CD14-positive monocyte (primary cell): ENCODE measurements at regions of chr19 and their contacts with region 1.

Region 1: DNA sequence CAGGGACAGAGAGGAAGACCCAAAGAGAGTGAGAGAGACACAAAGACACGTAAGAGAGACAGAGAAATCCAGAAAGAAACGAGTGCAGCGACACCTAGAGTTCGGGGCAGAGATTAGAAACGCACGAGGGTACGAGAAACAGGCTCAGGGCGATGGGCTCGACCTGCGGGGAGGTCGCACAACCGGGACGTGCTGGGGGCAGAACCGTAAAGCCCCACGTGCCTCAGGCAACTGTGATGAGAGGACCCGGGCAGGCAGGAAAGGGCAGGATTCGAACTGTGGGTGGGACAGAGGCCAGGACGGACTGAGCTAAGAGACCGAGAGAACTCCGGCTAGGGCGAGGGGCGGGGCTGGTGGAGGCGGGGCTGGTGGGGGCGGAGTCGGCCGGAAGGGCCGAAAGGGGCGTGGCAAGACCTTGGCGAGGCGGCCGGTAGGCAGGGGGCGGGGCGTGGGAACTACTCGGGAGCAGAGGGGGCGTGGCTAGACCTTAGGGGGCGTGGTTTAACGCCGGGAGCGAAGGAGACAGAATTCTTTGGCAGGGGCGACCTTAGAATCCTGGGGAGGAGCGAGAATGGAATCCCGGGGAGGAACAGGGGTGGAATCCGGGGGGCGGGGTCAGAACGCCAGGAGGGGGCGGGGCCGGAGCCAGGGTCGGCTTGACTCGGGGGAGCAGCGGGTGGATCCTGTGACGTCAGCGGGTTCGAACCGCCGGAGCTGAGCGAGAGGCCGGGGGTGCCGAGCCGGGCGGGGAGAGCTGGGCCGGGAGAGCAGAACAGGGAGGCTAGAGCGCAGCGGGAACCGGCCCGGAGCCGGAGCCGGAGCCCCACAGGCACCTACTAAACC is at the start of gene NECTIN2:
- DNase-seq: peak; percentile 89 to 95 (median 93)
- H3K4me3 ChIP-seq: peak within 1 kb of the TSS; percentile 47 to 94 (median 85)
- H3K4me3 Mint-ChIP-seq: peak within 1 kb of the TSS; percentile 96 to 98
- H3K27ac ChIP-seq: peak within 1 kb of the TSS; percentile 24 to 80
- H3K27ac Mint-ChIP-seq: peak within 1 kb of the TSS; percentile 76 to 99 (median 95)
- H3K4me1 ChIP-seq: peaks cover 45 to 55% of the 10 kb centered on the region in 2 donors
- H3K4me1 Mint-ChIP-seq: peaks cover 38% of the 10 kb centered on the region
- H3K27me3 ChIP-seq: peaks cover 0 to 3% of the 10 kb centered on the region in 2 donors
- H3K27me3 Mint-ChIP-seq: peaks cover 14 to 26% (median 26%) of the 10 kb centered on the region in 3 donors
- CTCF ChIP-seq: peak; percentile 3
- polyA plus RNA-seq, gene NECTIN2: 5.6 to 18.2 (median 9.3) TPM

Region 2: GRCh38 chr19:44570984-44571684 is 274.7 kb before region 1 on chr19:
- intact Hi-C with region 1: loop called (anchors 10 kb)
- DNase-seq: peak; percentile 65 to 73 (median 71)
- H3K4me3 ChIP-seq: no peak overlapping the region
- H3K4me3 Mint-ChIP-seq: no peak overlapping the region
- H3K27ac ChIP-seq: no peak overlapping the region
- H3K27ac Mint-ChIP-seq: peak overlapping the region in 2 of 7 donors; percentile 17 to 36
- H3K4me1 ChIP-seq: peaks cover 15 to 21% of the 10 kb centered on the region in 2 donors
- H3K4me1 Mint-ChIP-seq: peaks cover 18% of the 10 kb centered on the region
- H3K27me3 ChIP-seq: no peaks in the 10 kb centered on the region
- H3K27me3 Mint-ChIP-seq: peaks cover 2 to 16% (median 6%) of the 10 kb centered on the region in 3 donors
- CTCF ChIP-seq: peak; percentile 89

Region 3: GRCh38 chr19:44689056-44689895 is 156.6 kb before region 1 on chr19:
- intact Hi-C with region 1: loop called in 1 of 2 experiments (anchors 10 kb)
- DNase-seq: peak; percentile 54 to 75 (median 60)
- H3K4me3 ChIP-seq: no peak overlapping the region
- H3K4me3 Mint-ChIP-seq: peak overlapping the region; percentile 24 to 60
- H3K27ac ChIP-seq: no peak overlapping the region
- H3K27ac Mint-ChIP-seq: peak overlapping the region in 6 of 7 donors; percentile 40 to 90 (median 62)
- H3K4me1 ChIP-seq: peaks cover 74 to 84% of the 10 kb centered on the region in 2 donors
- H3K4me1 Mint-ChIP-seq: peaks cover 77% of the 10 kb centered on the region
- H3K27me3 ChIP-seq: no peaks in the 10 kb centered on the region
- H3K27me3 Mint-ChIP-seq: peaks cover 3 to 5% (median 3%) of the 10 kb centered on the region in 3 donors
- CTCF ChIP-seq: peak; percentile 97

Region 4: DNA sequence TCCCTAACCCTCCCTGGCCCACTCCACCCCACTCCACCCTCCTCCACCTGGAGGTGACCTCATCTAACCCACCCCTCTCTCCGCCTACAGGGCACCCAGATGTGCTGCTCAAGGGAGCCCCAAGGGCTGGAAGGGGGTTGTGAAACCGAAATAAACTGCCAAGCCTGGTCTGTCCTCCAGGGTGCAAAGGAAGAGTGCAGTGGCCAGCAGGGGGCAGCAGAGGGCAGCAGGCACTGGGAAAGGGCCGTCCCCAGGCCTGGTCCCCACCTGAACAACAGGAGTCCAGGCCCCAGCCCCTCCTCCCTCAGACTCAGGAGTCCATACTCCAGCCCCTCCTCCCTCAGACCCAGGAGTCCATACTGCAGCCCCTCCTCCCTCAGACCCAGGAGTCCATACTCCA is 45.4 kb before region 1 on chr19:
- intact Hi-C with region 1: loop called (anchors 1 kb)
- DNase-seq: peak; percentile 76 to 82 (median 76)
- H3K4me3 ChIP-seq: no peak overlapping the region
- H3K4me3 Mint-ChIP-seq: no peak overlapping the region
- H3K27ac ChIP-seq: no peak overlapping the region
- H3K27ac Mint-ChIP-seq: no peak overlapping the region
- H3K4me1 ChIP-seq: peaks cover 3 to 5% of the 10 kb centered on the region in 2 donors
- H3K4me1 Mint-ChIP-seq: peaks cover 4% of the 10 kb centered on the region
- H3K27me3 ChIP-seq: no peaks in the 10 kb centered on the region
- H3K27me3 Mint-ChIP-seq: peaks cover 2 to 11% (median 5%) of the 10 kb centered on the region in 3 donors
- CTCF ChIP-seq: peak; percentile 81

Region 5: GRCh38 chr19:44890366-44891015 is 44.7 kb after region 1 on chr19:
- intact Hi-C with region 1: loop called in 1 of 2 experiments (anchors 2 kb)
- DNase-seq: peak; percentile 96 to 100 (median 100)
- H3K4me3 ChIP-seq: peak overlapping the region; percentile 61 to 78 (median 68)
- H3K4me3 Mint-ChIP-seq: peak overlapping the region; percentile 83 to 95
- H3K27ac ChIP-seq: peak overlapping the region; percentile 97 to 99
- H3K27ac Mint-ChIP-seq: peak overlapping the region; percentile 90 to 98 (median 96)
- H3K4me1 ChIP-seq: peaks cover 20 to 25% of the 10 kb centered on the region in 2 donors
- H3K4me1 Mint-ChIP-seq: peaks cover 23% of the 10 kb centered on the region
- H3K27me3 ChIP-seq: no peaks in the 10 kb centered on the region
- H3K27me3 Mint-ChIP-seq: peaks cover 0 to 2% (median 1%) of the 10 kb centered on the region in 3 donors
- CTCF ChIP-seq: no peak

Region 6: DNA sequence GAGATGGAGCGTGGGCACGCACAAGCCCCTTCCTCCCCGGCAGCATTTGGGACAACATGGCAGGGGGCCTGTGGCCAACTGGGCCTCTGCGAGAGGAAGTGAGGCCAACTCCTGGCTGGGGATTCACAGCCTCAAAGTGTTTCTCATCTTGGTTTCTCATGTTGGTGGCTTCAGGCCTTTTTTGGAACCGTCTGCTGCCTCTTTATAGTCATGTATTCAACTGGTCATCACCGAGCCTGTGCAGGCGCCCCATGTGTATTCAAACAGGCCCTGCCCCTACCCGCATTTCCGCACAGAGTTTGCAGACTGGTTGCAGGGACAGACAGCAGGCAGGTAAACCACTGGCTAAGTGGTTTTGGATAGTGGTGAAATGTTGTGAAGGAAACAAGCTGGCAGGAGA is 138.2 kb after region 1 on chr19:
- intact Hi-C with region 1: no loop called
- DNase-seq: no peak
- H3K4me3 ChIP-seq: no peak overlapping the region
- H3K4me3 Mint-ChIP-seq: no peak overlapping the region
- H3K27ac ChIP-seq: no peak overlapping the region
- H3K27ac Mint-ChIP-seq: peak overlapping the region in 2 of 7 donors; percentile 38 to 64
- H3K4me1 ChIP-seq: peaks cover 0 to 4% of the 10 kb centered on the region in 2 donors
- H3K4me1 Mint-ChIP-seq: peaks cover 6% of the 10 kb centered on the region
- H3K27me3 ChIP-seq: no peaks in the 10 kb centered on the region
- H3K27me3 Mint-ChIP-seq: peaks cover 0 to 2% (median 0%) of the 10 kb centered on the region in 3 donors
- CTCF ChIP-seq: no peak